Ovary (tissue), 10 donors: ENCODE measurements at regions of chr15 and their contacts with region 1.

Region 1: GRCh38 chr15:69489073-69489571 is 36.5 kb downstream of the RPLP1 start:
- DNase-seq: no peak
- H3K4me3 ChIP-seq: no peak overlapping the region
- H3K27ac ChIP-seq: no peak overlapping the region
- H3K4me1 ChIP-seq: peaks cover 10% of the 10 kb centered on the region
- H3K27me3 ChIP-seq: no peaks in the 10 kb centered on the region
- CTCF ChIP-seq: no peak
- EP300 ChIP-seq: no peak
- POLR2A ChIP-seq: no peak

Region 2: GRCh38 chr15:69648212-69648611 is 159.1 kb after region 1 on chr15:
- intact Hi-C with region 1: loop called in 1 of 4 experiments (anchors 10 kb)
- DNase-seq: peak in 1 of 5 donors; percentile 6
- H3K4me3 ChIP-seq: no peak overlapping the region
- H3K27ac ChIP-seq: no peak overlapping the region
- H3K4me1 ChIP-seq: peaks cover 4% of the 10 kb centered on the region
- H3K27me3 ChIP-seq: no peaks in the 10 kb centered on the region
- CTCF ChIP-seq: no peak
- EP300 ChIP-seq: no peak
- POLR2A ChIP-seq: no peak

Region 3: DNA sequence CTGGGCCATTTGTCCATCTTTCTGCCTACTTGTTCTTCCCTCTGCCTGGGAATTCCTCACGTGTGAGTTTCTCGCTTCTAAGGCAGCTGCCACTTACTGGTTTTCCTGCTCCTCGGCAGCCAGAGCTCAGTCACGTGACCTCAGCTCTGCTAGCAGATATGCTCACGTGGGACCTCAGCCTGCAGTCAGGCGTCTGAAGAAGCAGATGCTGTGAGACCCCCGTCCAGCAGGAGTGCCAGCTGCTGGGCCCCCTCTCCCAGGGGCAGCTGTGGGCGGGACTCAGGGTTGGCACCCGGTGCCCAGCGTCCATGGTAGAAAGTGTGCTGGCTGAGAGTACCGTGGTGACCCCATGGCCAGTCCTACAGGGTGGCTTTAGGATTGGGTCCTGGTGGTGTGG is 769.9 kb after region 1 on chr15:
- intact Hi-C with region 1: loop called in 1 of 4 experiments (anchors 10 kb)
- DNase-seq: peak; percentile 59 to 69 (median 63)
- H3K4me3 ChIP-seq: no peak overlapping the region
- H3K27ac ChIP-seq: no peak overlapping the region
- H3K4me1 ChIP-seq: peaks cover 4% of the 10 kb centered on the region
- H3K27me3 ChIP-seq: no peaks in the 10 kb centered on the region
- CTCF ChIP-seq: no peak
- EP300 ChIP-seq: no peak
- POLR2A ChIP-seq: no peak